ENCODE measurements at regions of chrX and their contacts with region 1.

Region 1: GRCh38 chrX:110167952-110168451 is 149.9 kb downstream of the AMMECR1 start:
- DNase-seq: peak; percentile 66
- ATAC-seq: peak; percentile 91
- H3K4me3 Mint-ChIP-seq: no peak overlapping the region
- H3K27ac Mint-ChIP-seq: no peak overlapping the region
- H3K4me1 Mint-ChIP-seq: no peaks in the 10 kb centered on the region
- H3K27me3 Mint-ChIP-seq: no peaks in the 10 kb centered on the region
- CTCF ChIP-seq: peak; percentile 63

Region 2: DNA sequence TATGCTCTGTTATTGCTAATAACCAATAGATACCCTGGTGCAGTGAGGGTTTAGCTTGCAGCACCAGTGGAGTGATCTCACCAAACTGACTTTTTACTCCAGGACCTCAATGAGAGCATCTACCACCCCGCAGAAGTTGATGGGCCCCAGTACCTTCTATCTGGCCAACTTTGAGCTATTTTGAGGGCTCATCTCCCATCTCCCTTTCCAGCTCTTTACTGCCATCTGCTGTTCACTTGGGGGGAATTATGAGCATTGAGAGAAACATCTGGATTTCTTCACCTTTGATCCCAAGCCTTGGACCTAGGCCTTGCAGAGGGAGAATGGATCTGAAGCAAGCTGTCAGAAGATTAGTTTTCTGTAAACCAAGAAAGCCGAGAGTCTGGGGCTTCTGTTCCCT is 21.5 kb before region 1 on chrX:
- CTCF ChIA-PET with region 1: interaction called, 17 read pairs
- POLR2A ChIA-PET with region 1: no interaction called
- DNase-seq: peak; percentile 12
- ATAC-seq: peak; percentile 63
- H3K4me3 Mint-ChIP-seq: no peak overlapping the region
- H3K27ac Mint-ChIP-seq: no peak overlapping the region
- H3K4me1 Mint-ChIP-seq: peaks cover 13% of the 10 kb centered on the region
- H3K27me3 Mint-ChIP-seq: no peaks in the 10 kb centered on the region
- CTCF ChIP-seq: no peak

Region 3: GRCh38 chrX:110180176-110180927 is 12.3 kb after region 1 on chrX:
- CTCF ChIA-PET with region 1: interaction called, 26 read pairs
- POLR2A ChIA-PET with region 1: no interaction called
- DNase-seq: no peak
- ATAC-seq: peak; percentile 44
- H3K4me3 Mint-ChIP-seq: no peak overlapping the region
- H3K27ac Mint-ChIP-seq: no peak overlapping the region
- H3K4me1 Mint-ChIP-seq: peaks cover 10% of the 10 kb centered on the region
- H3K27me3 Mint-ChIP-seq: no peaks in the 10 kb centered on the region
- CTCF ChIP-seq: no peak

Region 4: DNA sequence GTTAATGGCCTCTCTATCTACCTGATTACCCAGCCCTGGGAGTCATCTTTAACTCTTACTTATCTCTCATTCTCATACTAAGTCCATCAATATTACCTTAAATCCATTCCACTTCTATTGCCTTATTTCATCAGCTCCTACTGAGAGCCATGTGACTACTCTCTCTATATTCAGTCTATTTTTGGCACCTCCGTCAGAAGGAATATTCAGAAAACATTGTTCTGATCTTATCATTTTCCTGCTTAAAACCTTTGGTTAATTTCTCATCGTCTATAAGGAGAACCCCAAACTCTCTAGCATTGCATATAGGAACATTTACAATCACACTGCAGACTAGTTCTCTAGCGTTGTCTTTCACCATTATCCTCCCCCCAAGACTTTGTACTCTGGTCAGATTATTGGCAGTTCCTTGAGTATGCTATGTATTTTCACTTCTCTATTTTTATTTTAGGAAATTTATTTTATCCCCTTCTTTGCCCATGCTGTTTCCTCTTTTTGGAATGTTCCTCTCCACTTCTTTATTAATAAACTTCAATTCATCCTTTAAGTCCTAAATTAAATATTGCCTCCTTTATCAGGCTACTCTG is 163.5 kb after region 1 on chrX:
- CTCF ChIA-PET with region 1: no interaction called
- POLR2A ChIA-PET with region 1: no interaction called
- DNase-seq: no peak
- ATAC-seq: no peak
- H3K4me3 Mint-ChIP-seq: no peak overlapping the region
- H3K27ac Mint-ChIP-seq: no peak overlapping the region
- H3K4me1 Mint-ChIP-seq: no peaks in the 10 kb centered on the region
- H3K27me3 Mint-ChIP-seq: no peaks in the 10 kb centered on the region
- CTCF ChIP-seq: no peak

Region 5: GRCh38 chrX:110407910-110408545 is 240.0 kb after region 1 on chrX:
- CTCF ChIA-PET with region 1: interaction called, 24 read pairs
- POLR2A ChIA-PET with region 1: no interaction called
- DNase-seq: peak; percentile 41
- ATAC-seq: peak; percentile 70
- H3K4me3 Mint-ChIP-seq: no peak overlapping the region
- H3K27ac Mint-ChIP-seq: no peak overlapping the region
- H3K4me1 Mint-ChIP-seq: peaks cover 11% of the 10 kb centered on the region
- H3K27me3 Mint-ChIP-seq: no peaks in the 10 kb centered on the region
- CTCF ChIP-seq: peak; percentile 64

Region 6: DNA sequence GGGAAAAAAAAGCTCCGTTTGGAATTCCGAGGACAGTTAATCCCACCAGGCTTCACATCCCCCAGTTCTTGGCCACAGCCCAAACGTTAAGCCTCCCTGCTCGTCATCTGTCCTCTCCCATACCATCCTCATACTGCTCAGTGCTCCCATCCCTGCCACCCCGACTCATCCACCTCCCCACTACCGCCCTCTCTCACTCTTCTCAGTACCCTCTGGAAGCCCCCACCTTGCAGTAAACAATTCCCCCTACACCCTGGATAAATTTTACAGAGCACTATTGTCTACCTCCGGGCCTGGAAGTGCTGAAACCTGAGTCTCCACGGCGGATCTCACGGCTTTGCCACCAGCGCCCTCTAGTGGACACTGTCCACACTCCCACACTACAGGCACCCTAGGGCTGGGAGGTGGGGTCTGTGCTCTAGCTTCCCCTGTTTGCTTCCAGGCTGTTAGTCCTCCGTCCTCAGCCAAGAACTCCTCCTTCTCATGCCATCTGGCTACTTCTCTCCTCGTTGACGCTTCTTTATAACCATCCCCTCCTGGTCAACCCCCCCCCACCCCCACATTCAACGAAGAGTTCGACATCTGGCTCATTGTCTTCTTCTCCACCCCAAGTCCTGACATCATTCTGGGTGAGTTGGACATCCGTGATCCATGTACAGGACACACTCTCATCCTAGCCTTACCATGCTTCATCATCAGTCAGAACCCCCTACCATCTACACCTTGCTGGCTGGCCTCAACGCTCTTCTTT is 245.1 kb after region 1 on chrX:
- CTCF ChIA-PET with region 1: interaction called, 24 read pairs
- POLR2A ChIA-PET with region 1: no interaction called
- DNase-seq: peak; percentile 73
- ATAC-seq: peak; percentile 96
- H3K4me3 Mint-ChIP-seq: peak overlapping the region; percentile 44
- H3K27ac Mint-ChIP-seq: no peak overlapping the region
- H3K4me1 Mint-ChIP-seq: peaks cover 12% of the 10 kb centered on the region
- H3K27me3 Mint-ChIP-seq: peaks cover 4% of the 10 kb centered on the region
- CTCF ChIP-seq: peak; percentile 75

Measured in WTC11 (cell line).